Transverse colon (tissue), 4 donors: ENCODE measurements at regions of chr20 and their contacts with region 1.

Region 1: GRCh38 chr20:53957451-53958172 is 112.8 kb downstream of the BCAS1 start:
- DNase-seq: no peak
- H3K4me3 ChIP-seq: no peak overlapping the region
- H3K27ac ChIP-seq: no peak overlapping the region
- H3K4me1 ChIP-seq: no peaks in the 10 kb centered on the region
- H3K27me3 ChIP-seq: no peaks in the 10 kb centered on the region
- CTCF ChIP-seq: no peak
- EP300 ChIP-seq: no peak
- POLR2A ChIP-seq: no peak

Region 2: DNA sequence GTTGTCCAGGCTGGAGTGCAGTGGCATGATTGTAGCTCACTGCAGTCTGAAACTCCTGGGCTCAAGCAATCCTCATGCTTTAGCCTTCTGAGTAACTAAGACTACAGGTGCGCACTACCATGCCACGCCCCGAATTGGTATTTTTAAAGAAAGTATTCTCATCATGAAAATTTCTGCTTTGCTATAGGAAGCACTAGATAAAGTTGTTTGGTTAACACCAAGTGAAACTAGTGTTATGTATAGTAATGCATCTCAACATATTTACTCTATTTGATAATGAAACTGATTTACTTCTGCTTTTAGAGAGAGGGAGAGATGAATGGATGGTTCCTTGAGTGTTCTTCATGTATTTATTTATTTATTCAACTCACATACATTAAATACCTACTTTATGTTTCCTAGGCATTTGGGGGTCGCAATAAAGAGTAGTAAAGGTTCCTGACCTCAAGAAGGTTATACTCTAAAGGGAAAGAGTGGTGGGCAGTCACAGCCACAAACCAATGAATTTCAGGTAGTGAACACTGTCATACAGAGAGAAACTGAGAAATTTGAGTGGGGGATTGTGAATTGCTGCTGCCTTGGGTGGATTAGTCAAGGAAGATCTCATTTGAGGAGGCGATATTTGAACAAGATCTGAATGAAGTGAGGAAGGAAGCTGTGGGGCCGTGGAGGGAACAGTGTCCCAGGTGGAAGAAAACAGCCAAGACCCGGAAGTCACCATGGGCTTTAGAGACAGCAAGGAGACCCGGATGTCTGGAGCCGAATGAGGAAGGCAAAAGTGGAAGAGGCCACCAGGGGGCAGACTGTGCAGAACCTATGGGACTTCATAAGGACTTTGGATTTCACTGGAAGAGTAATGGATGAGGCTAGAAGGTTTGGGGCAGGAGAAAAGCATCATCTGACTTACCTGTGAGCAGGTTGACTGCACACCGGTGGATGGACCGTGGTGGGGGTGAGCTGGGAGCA is 799.9 kb before region 1 on chr20:
- in situ Hi-C with region 1: loop called in 1 of 4 experiments (anchors 25 kb)
- intact Hi-C with region 1: no loop called
- DNase-seq: peak; percentile 59
- H3K4me3 ChIP-seq: no peak overlapping the region
- H3K27ac ChIP-seq: no peak overlapping the region
- H3K4me1 ChIP-seq: peaks cover 0 to 8% (median 0%) of the 10 kb centered on the region in 4 donors
- H3K27me3 ChIP-seq: no peaks in the 10 kb centered on the region
- CTCF ChIP-seq: peak; percentile 33 to 49 (median 44)
- EP300 ChIP-seq: no peak
- POLR2A ChIP-seq: no peak

Region 3: GRCh38 chr20:53413186-53413631 is 544.4 kb before region 1 on chr20:
- in situ Hi-C with region 1: loop called in 1 of 4 experiments (anchors 25 kb)
- intact Hi-C with region 1: no loop called
- DNase-seq: peak; percentile 70
- H3K4me3 ChIP-seq: no peak overlapping the region
- H3K27ac ChIP-seq: no peak overlapping the region
- H3K4me1 ChIP-seq: no peaks in the 10 kb centered on the region
- H3K27me3 ChIP-seq: no peaks in the 10 kb centered on the region
- CTCF ChIP-seq: peak in 4 of 5 experiments; percentile 37 to 60 (median 50)
- EP300 ChIP-seq: no peak
- POLR2A ChIP-seq: no peak

Region 4: DNA sequence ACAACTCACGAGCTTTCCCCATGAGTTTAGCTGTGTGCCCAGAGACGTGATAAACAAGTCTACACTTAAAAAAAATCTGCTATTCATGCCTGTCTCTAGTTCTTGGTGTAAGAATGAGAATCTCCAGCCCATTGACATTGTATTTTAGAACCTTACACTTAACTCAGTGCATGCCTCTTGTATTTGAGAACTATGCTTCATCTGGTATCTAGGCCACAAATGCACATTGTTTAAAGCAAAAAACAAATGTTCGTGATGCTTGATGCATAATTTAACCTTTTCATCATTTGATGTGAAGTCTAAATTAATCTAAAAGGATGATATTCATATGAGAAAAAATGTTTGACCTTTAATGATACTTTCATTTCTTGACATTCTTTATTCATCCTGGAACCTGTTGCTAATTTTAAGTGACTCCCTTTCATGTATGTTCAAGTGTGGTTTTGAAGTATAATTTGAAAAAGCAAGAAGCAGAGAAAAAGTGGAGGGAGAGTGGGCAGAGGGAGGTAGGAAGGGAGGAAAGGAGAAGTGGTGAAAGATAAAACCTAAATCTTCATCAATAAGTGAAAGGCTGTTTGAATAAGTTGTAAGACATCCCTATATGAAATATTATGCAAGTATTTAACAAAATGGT is 367.2 kb after region 1 on chr20:
- in situ Hi-C with region 1: no loop called
- intact Hi-C with region 1: no loop called
- DNase-seq: no peak
- H3K4me3 ChIP-seq: no peak overlapping the region
- H3K27ac ChIP-seq: no peak overlapping the region
- H3K4me1 ChIP-seq: no peaks in the 10 kb centered on the region
- H3K27me3 ChIP-seq: no peaks in the 10 kb centered on the region
- CTCF ChIP-seq: no peak
- EP300 ChIP-seq: no peak
- POLR2A ChIP-seq: no peak